Heart right ventricle (tissue), 16 donors: ENCODE measurements at regions of chr10 and their contacts with region 1.

Region 1: DNA sequence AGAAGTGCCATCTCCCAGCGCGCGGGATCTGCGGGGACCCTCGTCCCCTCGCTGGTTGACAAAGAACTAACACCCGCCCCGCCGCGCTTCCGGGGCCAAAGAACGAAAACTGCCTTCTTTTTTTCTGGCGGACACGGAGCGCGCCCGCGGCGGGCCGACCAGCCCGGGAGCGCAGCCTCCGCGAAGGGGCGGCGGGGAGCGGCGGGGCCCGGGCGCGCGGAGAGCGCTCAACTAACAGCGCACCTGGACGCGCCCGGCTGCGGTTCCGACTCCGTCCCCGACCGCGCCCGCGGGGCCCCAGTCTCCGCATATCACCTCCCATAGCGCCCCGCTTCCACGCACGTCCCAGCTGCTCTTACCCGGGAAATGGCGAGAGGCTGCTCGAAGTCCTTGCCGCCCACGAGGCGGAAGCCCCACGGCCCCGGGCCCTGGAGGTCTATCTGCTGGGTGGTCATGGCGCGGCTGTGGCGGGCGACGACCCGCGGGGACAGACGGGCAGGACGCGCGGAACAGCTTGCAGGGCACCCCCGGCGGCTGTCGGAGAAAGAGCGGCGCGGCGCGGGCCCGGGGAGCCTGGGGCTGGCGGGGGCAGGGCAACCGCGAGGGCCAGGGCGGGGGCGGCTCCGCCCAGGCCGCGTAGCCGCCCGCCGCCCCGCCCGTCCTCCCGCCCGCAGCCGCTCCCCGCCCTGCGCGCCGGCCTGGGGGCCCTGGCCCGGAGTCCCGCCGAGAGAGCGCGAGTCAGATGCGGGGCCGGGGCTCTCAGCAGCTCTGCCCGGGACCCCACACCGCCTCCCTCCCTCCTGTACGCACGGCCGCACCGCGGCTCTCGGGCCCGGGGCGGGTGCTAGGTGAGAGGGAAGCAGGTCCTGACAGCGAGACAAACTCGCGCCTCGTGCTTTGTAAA is at the start of gene PDLIM1:
- DNase-seq: peak; percentile 75 to 84
- ATAC-seq: peak; percentile 65 to 92 (median 83)
- H3K4me3 ChIP-seq: peak within 1 kb of the TSS; percentile 76 to 98 (median 94)
- H3K27ac ChIP-seq: peak within 1 kb of the TSS; percentile 91 to 98 (median 96)
- H3K4me1 ChIP-seq: peaks cover 4 to 63% (median 55%) of the 10 kb centered on the region in 9 donors
- H3K27me3 ChIP-seq: peaks cover 0 to 24% (median 0%) of the 10 kb centered on the region in 7 donors
- CTCF ChIP-seq: peak in 8 of 9 donors; percentile 12 to 56 (median 36)
- total RNA-seq, gene PDLIM1: 201 to 467 (median 347) TPM

Region 2: GRCh38 chr10:95254629-95255028 is 36.1 kb before region 1 on chr10:
- intact Hi-C with region 1: loop called in 3 of 10 experiments (anchors 5 kb)
- DNase-seq: no peak
- ATAC-seq: no peak
- H3K4me3 ChIP-seq: no peak overlapping the region
- H3K27ac ChIP-seq: peak overlapping the region in 5 of 10 donors; percentile 5 to 59 (median 25)
- H3K4me1 ChIP-seq: peaks cover 0 to 44% (median 33%) of the 10 kb centered on the region in 9 donors
- H3K27me3 ChIP-seq: no peaks in the 10 kb centered on the region
- CTCF ChIP-seq: no peak

Region 3: DNA sequence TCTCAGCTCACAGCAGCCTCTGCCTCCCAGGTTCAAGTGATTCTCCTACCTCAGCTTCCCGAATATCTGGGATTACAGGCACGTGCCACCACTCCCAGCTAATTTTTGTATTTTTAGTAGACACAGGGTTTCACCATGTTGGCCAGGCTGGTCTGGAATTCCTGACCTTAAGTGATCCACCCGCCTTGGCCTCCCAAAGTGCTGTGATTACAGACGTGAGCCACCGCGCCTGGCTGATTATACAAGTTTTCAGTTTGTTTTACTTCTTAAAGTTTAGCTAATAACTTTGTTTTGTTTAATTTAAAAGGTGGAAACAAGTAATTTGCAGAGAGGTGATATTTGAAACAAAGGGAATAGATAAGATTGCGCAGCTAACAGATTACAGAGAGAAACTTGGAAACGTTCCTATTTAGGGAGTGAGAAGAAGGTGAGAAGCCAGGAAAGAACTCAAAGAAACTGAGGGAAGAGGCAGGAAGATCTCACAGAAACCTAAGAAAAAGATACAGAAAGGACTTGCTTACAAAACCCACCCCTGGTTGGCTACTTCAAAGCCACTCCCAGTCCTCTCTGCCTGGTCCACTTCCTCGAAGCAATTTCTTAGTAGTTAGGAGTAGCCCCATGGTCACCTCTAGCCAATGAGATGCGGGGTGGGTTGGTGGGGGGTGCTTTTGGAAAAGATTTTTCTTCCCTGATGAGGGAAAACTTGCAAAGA is 15.0 kb after region 1 on chr10:
- intact Hi-C with region 1: loop called in 1 of 10 experiments (anchors 2 kb)
- DNase-seq: no peak
- ATAC-seq: no peak
- H3K4me3 ChIP-seq: no peak overlapping the region
- H3K27ac ChIP-seq: peak overlapping the region in 4 of 10 donors; percentile 2 to 52 (median 27)
- H3K4me1 ChIP-seq: peaks cover 0 to 58% (median 35%) of the 10 kb centered on the region in 9 donors
- H3K27me3 ChIP-seq: no peaks in the 10 kb centered on the region
- CTCF ChIP-seq: no peak

Region 4: DNA sequence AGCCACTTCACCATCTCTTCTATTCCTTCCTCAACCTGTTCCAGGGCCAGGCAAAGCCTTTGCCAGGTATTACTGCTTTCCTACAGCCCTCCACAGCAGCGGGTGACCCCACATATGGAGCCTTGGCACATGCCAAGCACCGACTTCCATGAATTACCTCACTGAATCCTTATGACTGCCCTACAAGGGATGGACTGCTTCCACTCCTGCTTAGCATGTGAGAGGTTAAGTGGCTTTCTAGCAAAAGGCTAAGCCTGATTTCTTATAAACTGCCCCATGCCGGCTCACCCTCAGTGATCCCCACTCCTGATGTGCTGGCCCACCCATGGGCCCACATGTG is 44.1 kb after region 1 on chr10:
- intact Hi-C with region 1: loop called in 1 of 10 experiments (anchors 5 kb)
- DNase-seq: no peak
- ATAC-seq: peak in 3 of 8 donors; percentile 3 to 35 (median 16)
- H3K4me3 ChIP-seq: peak overlapping the region in 1 of 10 donors; percentile 4
- H3K27ac ChIP-seq: peak overlapping the region; percentile 83 to 96 (median 91)
- H3K4me1 ChIP-seq: peaks cover 19 to 81% (median 53%) of the 10 kb centered on the region in 9 donors
- H3K27me3 ChIP-seq: no peaks in the 10 kb centered on the region
- CTCF ChIP-seq: no peak